Psoas muscle (tissue), 8 donors: ENCODE measurements at regions of chr17 and their contacts with region 1.

Region 1: DNA sequence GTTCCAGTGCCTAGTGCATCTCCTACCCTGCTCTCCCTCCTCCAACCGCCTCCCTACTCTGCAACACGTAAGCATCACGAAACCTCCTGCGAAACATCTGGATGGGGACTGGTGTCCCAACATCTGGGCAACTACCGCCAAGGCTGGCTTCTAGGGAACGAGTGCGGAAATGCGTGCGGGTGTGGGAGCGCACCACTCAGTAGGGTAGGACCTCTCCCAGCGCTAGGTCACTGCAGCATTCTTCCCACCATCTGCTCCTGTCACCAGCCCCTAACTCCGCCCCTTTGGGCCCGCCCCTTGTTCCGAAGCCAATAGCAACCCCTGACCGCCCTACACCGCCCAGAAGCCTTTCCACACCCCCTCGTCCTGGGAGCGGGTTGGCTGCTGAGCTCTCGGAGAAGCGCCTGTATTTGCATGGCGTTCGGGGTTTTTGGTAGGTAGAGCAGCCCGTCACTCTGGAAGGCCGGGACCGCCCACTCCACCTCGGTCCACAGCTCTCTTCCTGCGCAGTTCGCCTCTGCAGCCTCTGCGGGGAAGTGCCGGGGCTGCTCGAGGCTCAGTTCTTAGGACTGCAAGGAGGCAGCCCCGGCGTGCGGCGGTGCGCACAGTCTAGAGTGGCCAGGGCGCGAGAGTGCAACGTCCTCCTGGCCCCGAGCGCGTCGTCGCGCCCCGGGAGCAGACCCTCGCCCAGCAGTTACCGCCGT is at the start of gene HS3ST3B1:
- DNase-seq: peak; percentile 98
- ATAC-seq: peak; percentile 88 to 92 (median 91)
- H3K4me3 ChIP-seq: peak within 1 kb of the TSS; percentile 74
- H3K27ac ChIP-seq: peak within 1 kb of the TSS; percentile 68
- H3K4me1 ChIP-seq: peaks cover 13% of the 10 kb centered on the region
- H3K27me3 ChIP-seq: peaks cover 0 to 92% (median 37%) of the 10 kb centered on the region in 3 donors
- CTCF ChIP-seq: no peak
- total RNA-seq, gene HS3ST3B1: 0.63 to 1.5 (median 0.86) TPM

Region 2: DNA sequence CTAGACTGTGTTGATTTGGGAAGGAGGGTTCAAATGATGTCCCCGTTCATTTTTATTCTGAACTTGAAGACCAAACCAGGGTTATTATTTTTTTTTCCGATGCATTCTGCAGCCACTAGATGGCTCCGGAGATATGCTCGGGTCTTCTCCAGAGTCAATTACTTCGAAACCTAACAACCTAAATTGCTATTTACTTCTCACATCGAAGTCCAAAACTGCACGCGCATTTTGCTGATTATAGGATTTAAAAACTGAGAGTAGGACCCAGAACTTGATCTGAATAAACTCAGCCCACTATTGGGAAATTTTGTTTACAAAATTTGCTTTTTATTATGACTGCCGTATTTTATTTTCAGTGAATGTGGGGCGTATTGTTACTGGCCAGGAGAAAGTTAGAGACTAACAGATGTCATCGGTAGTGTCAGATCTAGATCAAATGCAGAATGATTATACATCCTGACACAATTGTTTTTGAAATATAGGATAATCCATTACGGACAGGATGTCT is 962.8 kb before region 1 on chr17:
- intact Hi-C with region 1: loop called (anchors 10 kb)
- DNase-seq: no peak
- ATAC-seq: no peak
- H3K4me3 ChIP-seq: peak overlapping the region; percentile 38
- H3K27ac ChIP-seq: no peak overlapping the region
- H3K4me1 ChIP-seq: no peaks in the 10 kb centered on the region
- H3K27me3 ChIP-seq: no peaks in the 10 kb centered on the region
- CTCF ChIP-seq: peak; percentile 58

Region 3: GRCh38 chr17:13594762-13595598 is 705.7 kb before region 1 on chr17:
- intact Hi-C with region 1: loop called (anchors 2 to 5 kb)
- DNase-seq: peak; percentile 51 to 66
- ATAC-seq: peak in 3 of 4 donors; percentile 65 to 86 (median 82)
- H3K4me3 ChIP-seq: no peak overlapping the region
- H3K27ac ChIP-seq: no peak overlapping the region
- H3K4me1 ChIP-seq: peaks cover 11% of the 10 kb centered on the region
- H3K27me3 ChIP-seq: peaks cover 0 to 24% (median 0%) of the 10 kb centered on the region in 3 donors
- CTCF ChIP-seq: peak; percentile 89

Region 4: GRCh38 chr17:14069251-14070021 is 231.3 kb before region 1 on chr17 and contains the start of gene COX10:
- intact Hi-C with region 1: loop called (anchors 5 to 10 kb)
- DNase-seq: peak; percentile 90 to 94
- ATAC-seq: peak; percentile 98 to 99 (median 99)
- H3K4me3 ChIP-seq: peak within 1 kb of the TSS; percentile 92
- H3K27ac ChIP-seq: peak within 1 kb of the TSS; percentile 91
- H3K4me1 ChIP-seq: peaks cover 24% of the 10 kb centered on the region
- H3K27me3 ChIP-seq: no peaks in the 10 kb centered on the region
- CTCF ChIP-seq: no peak
- total RNA-seq, gene COX10: 31.5 to 77.1 (median 43.9) TPM

Region 5: GRCh38 chr17:14211801-14212200 is 88.9 kb before region 1 on chr17:
- intact Hi-C with region 1: loop called in 1 of 2 experiments (anchors 5 kb)
- DNase-seq: peak; percentile 37 to 68
- ATAC-seq: no peak
- H3K4me3 ChIP-seq: no peak overlapping the region
- H3K27ac ChIP-seq: no peak overlapping the region
- H3K4me1 ChIP-seq: no peaks in the 10 kb centered on the region
- H3K27me3 ChIP-seq: no peaks in the 10 kb centered on the region
- CTCF ChIP-seq: peak; percentile 40